Tibial artery (tissue), 4 donors: ENCODE measurements at regions of chr12 and their contacts with region 1.

Region 1: DNA sequence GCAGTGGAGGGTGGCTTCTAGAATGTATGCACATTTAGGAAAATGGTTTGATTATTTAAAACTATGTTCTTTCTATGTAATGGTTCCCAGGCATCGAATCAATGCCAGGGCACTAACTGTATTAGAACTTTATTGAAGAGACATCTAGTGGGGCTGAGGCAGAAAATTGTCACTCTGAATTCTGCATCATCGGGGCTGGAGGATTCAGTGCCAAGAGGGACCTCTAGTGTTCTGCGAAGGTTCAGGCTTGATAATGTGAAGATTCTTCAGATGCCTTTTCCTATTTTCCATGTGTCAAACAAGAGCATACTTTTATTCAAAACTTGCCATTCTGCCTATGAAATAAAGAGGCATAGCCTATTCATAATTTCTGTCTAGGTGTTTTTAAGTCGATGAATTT is 146.3 kb downstream of the CAND1 start:
- DNase-seq: no peak
- H3K4me3 ChIP-seq: no peak overlapping the region
- H3K27ac ChIP-seq: no peak overlapping the region
- H3K4me1 ChIP-seq: peaks cover 0 to 20% (median 5%) of the 10 kb centered on the region in 4 donors
- H3K27me3 ChIP-seq: no peaks in the 10 kb centered on the region
- CTCF ChIP-seq: peak in 1 of 2 experiments; percentile 11

Region 2: GRCh38 chr12:66885115-66885875 is 530.2 kb before region 1 on chr12:
- intact Hi-C with region 1: no loop called
- DNase-seq: no peak
- H3K4me3 ChIP-seq: no peak overlapping the region
- H3K27ac ChIP-seq: no peak overlapping the region
- H3K4me1 ChIP-seq: no peaks in the 10 kb centered on the region
- H3K27me3 ChIP-seq: no peaks in the 10 kb centered on the region
- CTCF ChIP-seq: no peak

Region 3: DNA sequence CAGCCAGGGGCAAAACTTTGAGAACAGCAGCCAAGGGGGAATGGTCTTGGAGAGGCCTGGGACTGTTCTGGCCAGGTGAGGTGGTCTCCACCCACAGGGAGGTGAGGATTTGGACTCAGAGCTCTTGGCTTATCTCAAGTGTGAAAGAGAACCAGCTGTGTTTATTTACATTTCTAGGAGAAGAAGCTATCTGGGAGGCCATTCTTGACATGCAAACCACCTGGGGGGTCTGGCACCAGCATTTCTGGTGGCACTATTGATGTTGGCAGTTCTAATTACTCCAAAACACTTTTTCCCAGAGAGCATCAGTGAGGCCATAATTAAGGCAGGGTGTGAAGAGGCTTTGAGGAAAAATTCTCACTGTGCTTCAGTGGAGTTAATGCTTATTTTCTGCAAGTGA is 51.2 kb before region 1 on chr12:
- intact Hi-C with region 1: loop called (anchors 10 kb)
- DNase-seq: no peak
- H3K4me3 ChIP-seq: no peak overlapping the region
- H3K27ac ChIP-seq: no peak overlapping the region
- H3K4me1 ChIP-seq: no peaks in the 10 kb centered on the region
- H3K27me3 ChIP-seq: no peaks in the 10 kb centered on the region
- CTCF ChIP-seq: no peak

Region 4: DNA sequence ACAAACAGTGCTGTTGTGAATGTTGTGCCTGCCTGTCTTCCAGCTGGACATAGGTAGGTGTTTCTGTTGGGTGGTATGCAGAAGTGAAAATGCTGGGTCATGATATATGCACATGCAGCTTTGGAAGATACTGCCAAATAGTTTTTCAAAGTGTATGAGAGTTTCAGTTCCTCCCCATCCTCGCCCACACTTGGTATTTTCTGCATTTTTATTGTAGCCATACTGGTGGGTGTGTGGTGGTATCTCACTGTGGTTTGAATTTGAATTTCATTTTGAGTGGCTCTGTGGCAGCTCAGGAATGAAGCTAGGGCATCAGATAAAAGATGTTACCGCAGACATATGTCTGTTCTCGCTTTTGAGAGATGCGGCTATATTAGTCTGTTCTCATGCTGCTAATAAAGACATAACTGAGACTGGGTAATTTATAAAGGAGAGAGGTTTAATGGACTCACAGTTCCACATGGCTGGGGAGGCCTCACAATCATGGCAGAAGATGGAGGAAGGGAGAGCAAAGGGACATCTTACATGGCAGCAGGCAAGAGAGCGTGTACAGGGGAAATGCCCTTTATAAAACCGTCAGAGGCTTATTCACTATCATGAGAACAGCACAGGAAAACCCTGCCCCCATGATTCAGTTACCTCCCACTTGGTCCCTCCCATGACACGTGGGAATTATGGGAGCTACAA is 36.8 kb after region 1 on chr12:
- intact Hi-C with region 1: no loop called
- DNase-seq: no peak
- H3K4me3 ChIP-seq: no peak overlapping the region
- H3K27ac ChIP-seq: no peak overlapping the region
- H3K4me1 ChIP-seq: peaks cover 0 to 14% (median 11%) of the 10 kb centered on the region in 4 donors
- H3K27me3 ChIP-seq: no peaks in the 10 kb centered on the region
- CTCF ChIP-seq: no peak

Region 5: DNA sequence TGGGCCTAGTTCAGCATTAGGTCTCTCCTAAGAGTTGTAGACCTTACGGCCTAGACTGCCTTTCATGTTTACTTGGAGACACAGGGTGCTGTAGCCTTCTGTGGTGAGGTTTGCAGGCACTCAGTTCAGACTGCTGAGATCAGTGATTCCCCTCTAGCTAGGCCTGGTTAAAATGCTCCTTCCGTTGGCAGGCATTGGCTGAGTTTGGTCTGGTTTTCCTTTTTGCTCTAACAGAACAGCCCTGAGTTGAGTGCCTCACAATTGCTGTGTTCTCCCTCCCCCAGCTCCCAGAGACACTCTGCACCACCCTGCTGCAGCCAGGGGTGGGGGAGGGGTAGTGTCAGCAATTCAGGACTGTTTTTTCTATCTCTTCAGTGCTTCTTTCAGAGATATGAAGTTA is 54.2 kb after region 1 on chr12:
- intact Hi-C with region 1: no loop called
- DNase-seq: no peak
- H3K4me3 ChIP-seq: no peak overlapping the region
- H3K27ac ChIP-seq: no peak overlapping the region
- H3K4me1 ChIP-seq: no peaks in the 10 kb centered on the region
- H3K27me3 ChIP-seq: no peaks in the 10 kb centered on the region
- CTCF ChIP-seq: no peak